Caco-2 (cell line): ENCODE measurements at regions of chr12 and their contacts with region 1.

Region 1: DNA sequence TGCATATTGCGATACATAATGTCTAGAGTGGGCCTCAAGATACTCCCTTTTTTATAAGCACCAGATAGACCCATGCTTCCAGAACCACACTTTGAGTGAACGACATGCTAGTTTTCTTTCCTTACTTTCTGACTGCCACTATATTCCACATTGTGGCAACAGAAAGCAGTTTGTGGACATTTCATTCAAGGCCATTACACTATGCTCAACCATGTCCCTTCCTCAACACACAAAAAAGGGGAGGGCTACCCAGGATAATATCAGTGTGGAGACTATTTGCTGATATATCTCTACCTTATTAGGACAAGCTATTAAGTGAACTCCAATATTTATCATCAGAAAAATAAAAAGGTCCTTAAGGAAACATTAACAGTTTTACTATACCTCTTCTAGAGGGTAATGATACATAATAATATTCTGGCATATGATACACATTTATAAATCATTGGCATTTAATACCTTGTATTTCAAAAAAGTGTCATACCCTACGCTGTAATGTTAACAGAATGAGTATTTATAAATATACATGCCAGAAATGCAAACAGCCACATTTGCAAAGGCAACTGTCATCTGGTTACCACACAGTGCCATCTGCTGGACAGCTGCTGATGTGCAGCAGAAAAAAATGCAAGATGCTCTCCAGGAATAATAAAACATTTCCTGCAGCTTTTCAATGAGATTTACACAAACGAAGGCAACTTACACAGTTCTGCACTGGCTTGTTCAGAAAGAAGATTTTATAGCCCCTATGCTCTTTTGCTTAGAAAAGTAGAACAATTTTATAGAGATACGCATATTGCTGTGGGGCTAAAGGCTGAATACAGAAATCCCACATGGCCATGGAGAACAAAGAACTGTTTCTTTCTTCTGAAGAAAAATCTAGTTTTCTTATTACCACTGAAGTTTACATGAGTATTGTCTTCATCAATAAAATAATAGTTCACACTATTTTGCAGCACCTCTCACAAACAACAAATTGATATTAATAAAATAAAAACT is 182.2 kb upstream of the GRIP1 start:
- DNase-seq: peak; percentile 48 to 64
- H3K4me3 ChIP-seq: no peak overlapping the region
- H3K4me3 Mint-ChIP-seq: no peak overlapping the region
- H3K27ac Mint-ChIP-seq: no peak overlapping the region
- H3K4me1 ChIP-seq: no peaks in the 10 kb centered on the region
- H3K4me1 Mint-ChIP-seq: no peaks in the 10 kb centered on the region
- H3K27me3 ChIP-seq: no peaks in the 10 kb centered on the region
- H3K27me3 Mint-ChIP-seq: peaks cover 11% of the 10 kb centered on the region
- CTCF ChIP-seq: peak; percentile 85 to 88

Region 2: GRCh38 chr12:66688846-66689439 is 172.1 kb before region 1 on chr12:
- CTCF ChIA-PET with region 1: interaction called, 4 read pairs
- POLR2A ChIA-PET with region 1: no interaction called
- intact Hi-C with region 1: loop called (anchors 1 kb)
- DNase-seq: peak; percentile 81 to 82
- H3K4me3 ChIP-seq: no peak overlapping the region
- H3K4me3 Mint-ChIP-seq: no peak overlapping the region
- H3K27ac Mint-ChIP-seq: no peak overlapping the region
- H3K4me1 ChIP-seq: no peaks in the 10 kb centered on the region
- H3K4me1 Mint-ChIP-seq: no peaks in the 10 kb centered on the region
- H3K27me3 ChIP-seq: no peaks in the 10 kb centered on the region
- H3K27me3 Mint-ChIP-seq: peaks cover 11% of the 10 kb centered on the region
- CTCF ChIP-seq: peak; percentile 66 to 87

Region 3: DNA sequence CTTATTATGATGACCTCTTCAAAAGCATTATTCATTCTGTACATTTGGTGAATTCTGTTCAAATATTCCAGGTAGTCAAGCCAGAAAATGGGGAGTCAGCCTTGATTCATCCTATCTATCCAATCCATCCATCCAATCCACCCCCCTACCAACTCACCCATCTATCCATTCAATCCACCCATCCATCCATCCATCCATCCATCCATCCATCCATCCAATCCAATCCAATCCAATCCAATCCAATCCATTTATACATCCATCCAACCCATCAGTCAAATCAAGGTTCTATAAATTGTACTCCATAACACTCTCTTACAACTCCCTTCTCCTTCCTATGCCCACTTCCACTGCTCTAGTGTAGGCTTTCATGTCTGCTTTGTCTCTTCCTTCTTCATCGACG is 146.3 kb before region 1 on chr12:
- CTCF ChIA-PET with region 1: no interaction called
- POLR2A ChIA-PET with region 1: no interaction called
- intact Hi-C with region 1: loop called (anchors 1 kb)
- DNase-seq: no peak
- H3K4me3 ChIP-seq: no peak overlapping the region
- H3K4me3 Mint-ChIP-seq: no peak overlapping the region
- H3K27ac Mint-ChIP-seq: no peak overlapping the region
- H3K4me1 ChIP-seq: no peaks in the 10 kb centered on the region
- H3K4me1 Mint-ChIP-seq: no peaks in the 10 kb centered on the region
- H3K27me3 ChIP-seq: no peaks in the 10 kb centered on the region
- H3K27me3 Mint-ChIP-seq: peaks cover 11% of the 10 kb centered on the region
- CTCF ChIP-seq: no peak

Region 4: DNA sequence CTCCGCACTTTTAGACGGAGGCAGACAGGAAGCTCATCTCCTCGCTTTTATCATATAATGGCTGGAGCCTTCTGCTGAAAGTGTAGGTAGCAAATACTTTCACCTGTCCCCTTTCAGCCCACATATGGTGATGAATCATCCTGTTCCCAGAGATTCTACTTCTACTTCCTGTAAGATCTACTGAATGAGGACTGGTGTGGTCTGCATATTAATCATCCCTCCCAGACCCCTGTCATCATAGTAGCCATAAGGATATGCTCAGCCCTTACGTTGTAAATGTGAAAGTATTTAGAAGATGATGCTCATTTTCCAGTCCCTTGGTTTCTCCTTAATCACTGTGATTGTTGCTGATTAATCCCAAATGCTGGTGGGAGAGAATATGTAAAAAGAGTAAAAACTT is 86.1 kb after region 1 on chr12:
- CTCF ChIA-PET with region 1: no interaction called
- POLR2A ChIA-PET with region 1: no interaction called
- intact Hi-C with region 1: no loop called
- DNase-seq: no peak
- H3K4me3 ChIP-seq: no peak overlapping the region
- H3K4me3 Mint-ChIP-seq: no peak overlapping the region
- H3K27ac Mint-ChIP-seq: no peak overlapping the region
- H3K4me1 ChIP-seq: no peaks in the 10 kb centered on the region
- H3K4me1 Mint-ChIP-seq: no peaks in the 10 kb centered on the region
- H3K27me3 ChIP-seq: no peaks in the 10 kb centered on the region
- H3K27me3 Mint-ChIP-seq: peaks cover 17% of the 10 kb centered on the region
- CTCF ChIP-seq: no peak